ENCODE measurements at regions of chr3 and their contacts with region 1.

Region 1: GRCh38 chr3:129645290-129645689 is 38.8 kb upstream of the PLXND1 start:
- DNase-seq: no peak
- H3K4me3 ChIP-seq: no peak overlapping the region
- H3K27ac ChIP-seq: no peak overlapping the region
- H3K4me1 ChIP-seq: peaks cover 6% of the 10 kb centered on the region
- H3K27me3 ChIP-seq: no peaks in the 10 kb centered on the region
- CTCF ChIP-seq: no peak
- POLR2A ChIP-seq: no peak

Region 2: DNA sequence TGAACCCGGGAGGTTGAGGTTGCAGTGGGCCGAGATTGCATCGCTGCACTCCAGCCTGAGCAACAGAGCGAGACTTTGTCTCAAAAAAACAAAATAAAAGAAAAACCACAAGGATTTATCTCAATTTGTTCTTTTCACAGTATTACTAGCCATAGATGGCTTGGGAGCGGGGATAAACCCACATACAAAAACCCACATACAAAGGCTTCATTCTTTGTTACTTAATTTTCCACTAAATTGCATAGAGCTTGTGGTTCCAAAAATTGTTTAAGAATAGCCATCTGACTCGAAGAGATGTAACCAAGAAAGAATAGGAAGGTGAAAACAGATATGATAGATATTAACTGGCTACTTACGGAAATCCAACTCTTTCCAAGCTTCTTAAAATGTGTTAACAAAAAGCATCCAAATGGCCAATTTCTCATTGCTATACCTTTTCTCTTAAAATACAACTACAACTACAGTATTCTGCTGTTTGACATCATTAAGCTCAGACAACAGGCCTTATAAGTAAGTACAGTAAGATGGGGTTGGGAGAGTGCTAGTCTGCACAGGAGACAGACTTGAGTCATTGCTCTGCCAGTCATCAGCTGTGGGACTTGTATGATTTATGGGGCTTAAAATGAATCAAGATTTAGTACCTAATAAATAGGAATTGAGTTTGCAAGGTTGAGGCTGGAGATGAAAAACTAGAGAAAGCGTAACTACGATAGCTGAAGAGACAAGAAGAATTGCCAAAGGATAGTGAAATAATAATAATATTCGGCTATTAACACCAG is 57.8 kb after region 1 on chr3:
- intact Hi-C with region 1: no loop called
- DNase-seq: no peak
- H3K4me3 ChIP-seq: no peak overlapping the region
- H3K27ac ChIP-seq: no peak overlapping the region
- H3K4me1 ChIP-seq: peaks cover 3% of the 10 kb centered on the region
- H3K27me3 ChIP-seq: no peaks in the 10 kb centered on the region
- CTCF ChIP-seq: no peak
- POLR2A ChIP-seq: no peak

Region 3: DNA sequence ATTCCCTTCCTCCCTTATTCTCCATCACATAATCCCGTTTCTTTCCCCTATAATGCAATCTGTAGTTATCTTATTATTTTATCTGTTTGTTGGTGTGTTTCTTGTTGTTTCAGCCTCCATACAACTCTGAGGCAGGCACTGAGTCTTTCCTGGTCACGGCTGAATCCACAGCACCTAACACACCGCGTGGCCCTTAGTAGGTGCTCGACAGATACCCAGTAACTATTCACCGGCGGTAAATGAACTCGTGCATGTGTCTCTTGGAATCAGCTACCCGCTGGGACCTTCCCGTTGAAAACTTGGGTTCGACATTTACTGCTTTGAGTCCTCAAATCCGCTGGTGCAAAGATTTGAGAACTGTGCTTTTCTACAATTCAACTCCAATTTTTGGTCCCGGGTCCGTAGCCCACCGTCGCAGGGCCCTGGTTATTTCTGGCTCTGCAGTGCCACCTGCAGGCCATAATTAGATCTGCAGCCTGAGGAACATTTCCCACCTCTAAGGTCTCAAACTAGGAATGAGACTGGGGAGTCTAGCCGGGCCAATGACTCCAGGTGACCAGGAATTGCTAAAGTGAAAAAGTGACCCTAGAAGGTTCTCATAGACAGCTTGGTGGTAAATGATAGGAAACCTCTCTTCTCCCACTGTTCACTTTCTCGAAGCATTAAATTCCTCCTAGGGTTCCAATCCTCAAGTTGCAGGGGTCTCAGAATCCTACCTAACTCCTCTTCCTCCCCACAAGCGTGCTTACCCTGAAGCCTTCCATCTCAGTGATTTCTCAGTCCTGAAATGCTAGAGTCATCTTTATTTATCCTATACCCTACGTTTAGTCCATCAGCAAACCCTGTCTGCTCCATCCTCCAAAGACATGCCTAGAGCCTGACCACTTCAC is 289.2 kb after region 1 on chr3:
- intact Hi-C with region 1: loop called (anchors 5 kb)
- DNase-seq: peak; percentile 61
- H3K4me3 ChIP-seq: no peak overlapping the region
- H3K27ac ChIP-seq: no peak overlapping the region
- H3K4me1 ChIP-seq: peaks cover 4% of the 10 kb centered on the region
- H3K27me3 ChIP-seq: no peaks in the 10 kb centered on the region
- CTCF ChIP-seq: peak; percentile 93 to 95 (median 94)
- POLR2A ChIP-seq: no peak

Measured in testis (tissue), 5 donors.